ENCODE measurements at regions of chr17 and their contacts with region 1.

Region 1: GRCh38 chr17:20992987-20993862 is 49.6 kb downstream of the USP22 start:
- DNase-seq: peak; percentile 65 to 92 (median 80)
- H3K4me3 ChIP-seq: peak overlapping the region in 1 of 4 donors; percentile 9
- H3K27ac ChIP-seq: peak overlapping the region in 2 of 5 donors; percentile 26 to 41
- H3K4me1 ChIP-seq: peaks cover 0 to 6% of the 10 kb centered on the region in 2 donors
- H3K27me3 ChIP-seq: no peaks in the 10 kb centered on the region
- CTCF ChIP-seq: peak; percentile 89 to 97 (median 92)
- POLR2A ChIP-seq: peak in 1 of 2 donors; percentile 19

Region 2: DNA sequence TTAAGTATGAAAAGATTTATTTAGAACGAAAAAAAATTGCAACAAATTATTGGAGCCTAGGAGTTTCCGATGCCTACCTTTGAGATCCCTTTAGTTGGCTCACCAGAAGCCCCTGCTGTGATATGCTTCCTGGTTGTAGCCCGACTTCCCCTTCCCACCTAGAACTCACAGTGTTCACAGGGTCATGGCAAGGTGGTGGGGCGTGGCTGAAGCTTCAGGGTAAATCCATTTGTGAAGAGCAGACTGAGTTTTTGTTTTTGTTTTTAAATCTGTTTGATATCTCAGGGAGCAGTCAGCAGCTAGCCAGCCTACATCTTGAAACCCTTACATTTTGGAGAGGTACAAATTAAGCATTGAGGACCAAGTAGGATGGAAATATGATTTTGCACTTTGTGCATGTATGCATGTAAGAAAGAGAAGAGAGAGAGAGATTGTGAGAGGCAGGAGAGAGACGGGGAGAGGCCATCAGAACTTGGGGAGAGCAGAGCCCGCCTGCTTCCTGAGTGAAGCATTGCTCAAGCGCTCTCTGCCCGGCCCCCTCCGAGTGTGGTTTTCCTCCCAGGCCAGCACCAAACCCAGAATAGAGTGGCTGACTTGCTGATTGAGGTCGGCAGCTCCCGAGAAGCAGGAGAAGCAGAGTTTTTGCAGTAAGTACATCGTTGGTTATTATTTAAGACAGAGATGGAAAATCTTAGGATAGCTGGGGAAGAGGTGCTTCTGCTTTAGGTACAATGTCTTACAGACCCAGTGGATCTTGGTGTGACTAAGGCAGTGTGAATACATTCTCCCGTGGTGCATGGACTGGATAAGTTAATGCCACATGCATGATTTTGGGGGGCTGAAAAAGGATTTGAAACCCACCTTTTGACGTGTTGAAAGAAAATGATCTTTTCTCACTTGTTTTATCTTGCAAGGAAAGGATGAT is 919.9 kb before region 1 on chr17:
- intact Hi-C with region 1: no loop called
- DNase-seq: peak in 6 of 7 donors; percentile 33 to 74 (median 42)
- H3K4me3 ChIP-seq: peak overlapping the region in 1 of 4 donors; percentile 35
- H3K27ac ChIP-seq: peak overlapping the region in 2 of 5 donors; percentile 49 to 67
- H3K4me1 ChIP-seq: no peaks in the 10 kb centered on the region
- H3K27me3 ChIP-seq: no peaks in the 10 kb centered on the region
- CTCF ChIP-seq: no peak
- POLR2A ChIP-seq: no peak

Region 3: GRCh38 chr17:20797292-20797691 is 195.9 kb before region 1 on chr17:
- intact Hi-C with region 1: loop called in 1 of 2 experiments (anchors 5 kb)
- DNase-seq: no peak
- H3K4me3 ChIP-seq: no peak overlapping the region
- H3K27ac ChIP-seq: no peak overlapping the region
- H3K4me1 ChIP-seq: no peaks in the 10 kb centered on the region
- H3K27me3 ChIP-seq: peaks cover 16% of the 10 kb centered on the region
- CTCF ChIP-seq: no peak
- POLR2A ChIP-seq: no peak

Region 4: DNA sequence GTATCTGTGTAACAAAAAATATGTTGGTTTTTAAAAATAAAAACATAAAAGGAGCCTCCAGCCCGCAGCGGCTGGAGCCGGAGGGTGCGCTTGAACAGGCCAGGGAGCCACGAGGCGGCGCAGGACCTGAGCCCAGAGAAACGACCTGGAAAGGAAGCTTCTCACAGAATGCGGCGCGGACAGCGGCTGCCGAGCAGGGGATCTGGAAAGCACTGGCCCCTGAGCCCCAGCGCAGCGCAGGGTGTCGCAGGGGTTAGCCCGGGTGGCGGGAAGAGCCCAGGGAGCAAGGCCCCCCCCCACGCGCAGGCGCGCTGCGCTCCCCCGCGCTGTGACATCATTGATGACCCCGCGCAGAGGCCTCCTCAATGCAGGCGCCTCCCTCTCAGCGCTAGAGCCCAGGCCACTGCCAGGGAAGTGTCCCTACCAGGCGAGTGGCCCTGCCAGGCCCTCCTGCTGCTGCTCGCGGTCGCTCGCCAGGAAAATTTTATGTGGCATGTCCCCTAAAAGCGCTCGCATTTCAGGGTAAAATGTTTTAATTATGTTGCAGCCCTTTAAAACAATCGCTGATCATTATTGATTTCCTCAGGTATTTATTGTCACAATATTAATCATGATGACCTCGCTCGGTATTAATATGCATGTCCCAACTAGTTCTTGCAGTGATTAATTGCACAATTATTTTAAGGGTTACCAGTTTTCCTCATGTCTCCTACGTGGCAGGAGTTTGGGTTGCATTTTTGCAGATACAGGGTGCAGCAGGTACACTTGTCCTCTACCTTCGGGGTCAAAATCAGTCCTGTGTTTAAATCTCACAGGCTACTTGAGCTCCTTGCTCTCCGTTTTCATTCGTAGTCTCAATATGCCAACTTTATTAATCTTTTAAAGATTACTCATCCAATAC is 84.6 kb before region 1 on chr17:
- intact Hi-C with region 1: loop called in 1 of 2 experiments (anchors 5 kb)
- DNase-seq: peak; percentile 93 to 96 (median 94)
- H3K4me3 ChIP-seq: peak overlapping the region in 2 of 4 donors; percentile 13 to 60
- H3K27ac ChIP-seq: peak overlapping the region in 4 of 5 donors; percentile 67 to 97 (median 90)
- H3K4me1 ChIP-seq: peaks cover 7 to 12% of the 10 kb centered on the region in 2 donors
- H3K27me3 ChIP-seq: no peaks in the 10 kb centered on the region
- CTCF ChIP-seq: peak; percentile 38 to 69 (median 60)
- POLR2A ChIP-seq: peak; percentile 63 to 85

Region 5: GRCh38 chr17:21358707-21359482 is 365.7 kb after region 1 on chr17:
- intact Hi-C with region 1: no loop called
- DNase-seq: no peak
- H3K4me3 ChIP-seq: no peak overlapping the region
- H3K27ac ChIP-seq: no peak overlapping the region
- H3K4me1 ChIP-seq: no peaks in the 10 kb centered on the region
- H3K27me3 ChIP-seq: no peaks in the 10 kb centered on the region
- CTCF ChIP-seq: no peak
- POLR2A ChIP-seq: no peak